Gastrocnemius medialis (tissue), 4 donors: ENCODE measurements at regions of chr20 and their contacts with region 1.

Region 1: GRCh38 chr20:63495741-63496595 is 2.9 kb downstream of the EEF1A2 start:
- DNase-seq: peak in 1 of 2 donors; percentile 70
- ATAC-seq: peak in 1 of 2 donors; percentile 21
- H3K4me3 ChIP-seq: peak overlapping the region; percentile 67 to 88 (median 84)
- H3K27ac ChIP-seq: peak overlapping the region; percentile 94 to 100 (median 98)
- H3K4me1 ChIP-seq: peaks cover 22 to 50% of the 10 kb centered on the region in 2 donors
- H3K27me3 ChIP-seq: no peaks in the 10 kb centered on the region
- CTCF ChIP-seq: peak; percentile 84 to 98 (median 97)
- POLR2A ChIP-seq: no peak

Region 2: GRCh38 chr20:63366390-63367365 is 129.3 kb before region 1 on chr20:
- in situ Hi-C with region 1: no loop called
- intact Hi-C with region 1: no loop called
- DNase-seq: no peak
- ATAC-seq: no peak
- H3K4me3 ChIP-seq: no peak overlapping the region
- H3K27ac ChIP-seq: no peak overlapping the region
- H3K4me1 ChIP-seq: peaks cover 0 to 4% of the 10 kb centered on the region in 2 donors
- H3K27me3 ChIP-seq: peaks cover 3 to 16% (median 15%) of the 10 kb centered on the region in 3 donors
- CTCF ChIP-seq: no peak
- POLR2A ChIP-seq: no peak

Region 3: DNA sequence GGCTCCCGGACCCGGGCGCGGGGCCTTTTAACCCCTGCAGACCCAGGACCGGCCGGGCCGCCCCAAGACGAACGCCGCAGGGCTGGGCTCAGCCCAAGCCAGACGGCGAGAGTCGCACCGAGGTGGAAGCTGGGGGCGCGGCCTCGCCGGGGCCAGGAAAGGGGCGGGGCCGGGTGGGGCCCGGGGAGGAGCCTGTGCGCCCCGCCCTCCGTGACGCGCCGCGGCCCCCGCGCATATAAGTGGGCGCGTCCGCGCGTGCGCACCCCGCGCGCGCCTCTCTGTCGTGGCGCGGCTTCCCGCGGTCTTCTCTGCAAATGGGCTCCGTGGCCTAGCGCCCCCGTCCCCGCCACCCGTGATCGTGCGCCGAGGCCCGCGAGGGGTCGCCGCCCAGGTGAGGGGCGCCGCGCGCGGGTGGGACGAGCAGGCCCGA is 24.6 kb after region 1 on chr20 and contains the start of gene PPDPF:
- in situ Hi-C with region 1: no loop called
- intact Hi-C with region 1: loop called (anchors 1 kb)
- DNase-seq: peak; percentile 60 to 73
- ATAC-seq: peak; percentile 88 to 90
- H3K4me3 ChIP-seq: peak within 1 kb of the TSS; percentile 75 to 88 (median 85)
- H3K27ac ChIP-seq: peak within 1 kb of the TSS; percentile 85 to 92 (median 87)
- H3K4me1 ChIP-seq: peaks cover 12 to 23% of the 10 kb centered on the region in 2 donors
- H3K27me3 ChIP-seq: no peaks in the 10 kb centered on the region
- CTCF ChIP-seq: no peak
- POLR2A ChIP-seq: peak; percentile 89 to 92
- total RNA-seq, gene PPDPF: 50.2 to 207 (median 76.1) TPM